Activated CD4-positive, alpha-beta T cell treated with anti-CD3 and anti-CD28 coated beads, Interleukin-2, amount 10 ng/mL, durations not matched to agents 24 days and 14 days (primary cell): ENCODE measurements at regions of chrX and their contacts with region 1.

Region 1: GRCh38 chrX:151753313-151754041 is 18.9 kb downstream of the CNGA2 start:
- DNase-seq: peak; percentile 59
- H3K4me3 Mint-ChIP-seq: no peak overlapping the region
- H3K27ac Mint-ChIP-seq: no peak overlapping the region
- H3K4me1 Mint-ChIP-seq: no peaks in the 10 kb centered on the region
- H3K27me3 Mint-ChIP-seq: no peaks in the 10 kb centered on the region

Region 2: DNA sequence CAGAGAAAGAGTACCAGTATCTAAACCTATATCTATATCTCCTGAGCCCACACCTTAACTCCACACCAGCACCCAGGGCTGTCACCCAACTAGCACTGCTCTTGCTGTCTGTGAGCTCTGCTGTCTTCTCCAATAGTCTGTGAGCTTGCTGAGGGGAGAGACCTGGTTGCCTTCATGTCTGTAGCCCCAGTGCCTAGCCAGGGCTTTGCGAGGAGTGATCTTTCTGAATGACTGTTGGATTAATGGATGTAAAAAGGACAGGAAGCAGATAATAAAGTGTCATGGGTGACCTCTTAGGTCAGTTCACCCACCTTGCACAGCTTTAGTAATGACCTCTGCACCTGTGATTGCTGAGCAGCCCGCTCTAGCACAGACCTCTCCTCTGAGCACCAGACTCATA is 11.5 kb after region 1 on chrX:
- intact Hi-C with region 1: no loop called
- DNase-seq: no peak
- H3K4me3 Mint-ChIP-seq: no peak overlapping the region
- H3K27ac Mint-ChIP-seq: no peak overlapping the region
- H3K4me1 Mint-ChIP-seq: no peaks in the 10 kb centered on the region
- H3K27me3 Mint-ChIP-seq: no peaks in the 10 kb centered on the region

Region 3: DNA sequence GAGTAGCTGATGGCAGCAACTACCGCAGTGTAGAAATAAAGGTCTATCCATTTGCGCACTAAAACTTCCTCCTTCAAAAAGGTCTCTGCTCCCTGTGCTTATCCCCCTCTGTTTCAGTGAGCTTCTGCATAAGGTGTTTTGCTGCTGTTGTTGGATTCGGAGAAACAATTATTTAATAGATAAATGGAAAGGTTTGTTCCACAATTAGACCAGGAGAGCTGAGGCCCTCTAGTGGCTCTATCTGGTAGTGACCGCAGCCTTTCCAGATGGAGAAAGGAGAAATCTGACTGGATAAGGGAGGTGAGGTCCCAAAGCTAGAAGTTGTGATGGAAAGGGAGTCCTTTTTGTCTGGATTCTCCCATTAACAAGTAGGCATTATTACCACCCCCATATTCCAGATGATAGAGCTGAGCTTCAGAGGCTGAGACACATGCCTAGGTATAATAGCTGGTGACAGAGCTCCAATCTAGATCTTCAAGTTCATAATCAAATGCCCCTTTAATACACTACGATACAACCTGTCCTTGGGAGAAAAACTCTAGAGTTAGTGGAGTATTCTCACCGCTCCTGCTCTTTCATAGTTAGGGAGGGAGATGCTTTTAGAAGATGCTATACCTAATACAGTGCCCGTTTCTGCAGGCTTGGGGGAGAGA is 879.1 kb after region 1 on chrX:
- intact Hi-C with region 1: loop called (anchors 5 kb)
- DNase-seq: peak; percentile 75
- H3K4me3 Mint-ChIP-seq: no peak overlapping the region
- H3K27ac Mint-ChIP-seq: no peak overlapping the region
- H3K4me1 Mint-ChIP-seq: no peaks in the 10 kb centered on the region
- H3K27me3 Mint-ChIP-seq: peaks cover 16% of the 10 kb centered on the region

Region 4: GRCh38 chrX:152821145-152821765 is 1067.8 kb after region 1 on chrX:
- intact Hi-C with region 1: loop called (anchors 5 kb)
- DNase-seq: peak; percentile 71
- H3K4me3 Mint-ChIP-seq: no peak overlapping the region
- H3K27ac Mint-ChIP-seq: no peak overlapping the region
- H3K4me1 Mint-ChIP-seq: peaks cover 2% of the 10 kb centered on the region
- H3K27me3 Mint-ChIP-seq: peaks cover 5% of the 10 kb centered on the region